ENCODE measurements at regions of chr11 and their contacts with region 1.

Region 1: DNA sequence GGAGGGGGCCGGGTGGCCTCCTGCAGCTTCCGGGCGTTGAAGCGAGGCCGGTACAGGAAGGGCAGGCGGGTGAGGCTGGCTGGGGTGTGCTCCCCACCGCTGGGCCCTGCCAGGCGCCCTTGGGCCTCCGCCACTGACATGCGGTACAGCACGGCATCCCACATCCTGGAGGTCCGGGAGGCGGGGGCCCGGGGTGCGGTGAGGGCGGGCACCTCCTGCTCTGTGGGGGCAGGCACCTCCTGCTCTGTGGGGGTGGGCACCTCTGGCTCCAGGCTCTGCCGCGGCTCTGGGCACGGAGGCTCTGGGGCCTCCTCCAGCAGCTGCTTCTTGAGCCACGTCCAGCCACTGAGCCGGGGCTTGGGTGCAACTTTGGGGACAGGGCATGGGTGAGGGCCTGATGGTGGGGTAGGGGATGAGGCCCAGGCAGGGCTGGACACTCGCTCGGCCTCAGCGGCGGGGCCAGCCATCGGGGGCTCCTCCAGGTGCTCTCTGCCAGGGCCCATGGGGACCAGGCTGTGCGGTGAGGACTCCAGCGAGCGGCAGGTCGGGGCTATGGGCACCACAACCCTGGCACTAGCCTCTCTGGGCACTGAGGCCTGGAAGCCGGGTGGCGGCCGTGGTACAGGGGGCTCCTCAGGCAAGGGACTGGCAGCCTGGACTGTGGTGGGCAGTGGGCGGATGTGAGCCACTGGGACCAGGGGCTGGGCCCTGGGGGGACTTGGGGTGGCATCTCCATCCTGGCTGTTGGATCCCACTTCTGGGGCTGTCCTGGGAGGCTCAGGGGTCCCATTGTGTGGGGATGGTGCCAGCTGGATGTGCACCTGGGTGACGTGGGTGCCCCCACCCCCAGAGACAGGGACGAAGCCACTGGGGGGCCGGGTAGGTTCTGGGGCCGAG is 2.2 kb downstream of the PRR33 start:
- DNase-seq: no peak
- H3K4me3 ChIP-seq: no peak overlapping the region
- H3K27ac ChIP-seq: no peak overlapping the region
- H3K4me1 ChIP-seq: no peaks in the 10 kb centered on the region
- H3K27me3 ChIP-seq: no peaks in the 10 kb centered on the region
- CTCF ChIP-seq: no peak
- EP300 ChIP-seq: no peak
- POLR2A ChIP-seq: no peak
- RAD21 ChIP-seq: no peak

Region 2: GRCh38 chr11:1917671-1918516 is 28.4 kb after region 1 on chr11:
- CTCF ChIA-PET with region 1: interaction called, 36 read pairs
- POLR2A ChIA-PET with region 1: no interaction called
- DNase-seq: no peak
- H3K4me3 ChIP-seq: no peak overlapping the region
- H3K27ac ChIP-seq: no peak overlapping the region
- H3K4me1 ChIP-seq: peaks cover 0 to 3% (median 3%) of the 10 kb centered on the region in 4 experiments; a peak in 4 of 7 replicates
- H3K27me3 ChIP-seq: no peaks in the 10 kb centered on the region
- CTCF ChIP-seq: peak; percentile 74 to 80 (median 77)
- EP300 ChIP-seq: no peak
- POLR2A ChIP-seq: no peak
- RAD21 ChIP-seq: peak; percentile 52 to 68

Measured in H1 (cell line).